ENCODE measurements at regions of chr19 and their contacts with region 1.

Region 1: DNA sequence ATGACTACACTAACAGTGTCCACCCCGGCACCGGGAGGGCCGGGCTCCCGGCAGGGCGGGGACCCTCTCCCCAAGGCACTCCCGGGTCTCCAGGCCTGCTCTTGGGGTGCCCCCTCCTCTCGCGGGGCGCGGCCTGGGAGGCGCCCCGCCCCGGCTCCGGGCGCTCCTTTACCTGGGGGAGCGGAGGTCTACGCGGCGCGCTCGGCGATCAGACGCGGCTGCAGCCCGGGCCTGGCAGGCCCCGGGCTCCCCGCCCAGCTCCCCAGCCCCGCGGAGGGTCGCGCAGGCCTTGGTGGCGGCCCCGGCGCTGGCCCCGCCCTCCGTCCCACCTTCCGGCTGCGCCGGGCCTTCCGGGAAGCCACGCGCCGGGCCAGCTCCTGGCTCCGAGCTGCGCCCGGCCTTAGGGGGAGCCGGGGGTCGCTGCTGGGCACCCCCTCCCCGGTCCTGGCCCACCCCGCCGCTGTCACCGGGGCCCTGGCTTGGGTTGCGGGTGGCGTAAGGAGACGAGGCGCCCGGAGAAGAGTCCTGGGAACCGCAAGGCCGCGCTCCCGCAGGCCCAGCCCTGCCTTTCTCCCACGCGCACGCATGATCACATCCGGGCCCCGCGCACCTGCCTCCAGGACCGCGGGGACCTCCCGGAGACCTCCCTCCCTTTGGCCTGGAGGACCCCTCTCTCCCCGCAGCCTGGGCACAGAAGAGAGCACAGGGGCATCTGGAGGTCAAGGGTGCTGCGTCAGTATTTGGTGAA is at the start of gene C19orf12:
- DNase-seq: peak; percentile 61
- ATAC-seq: peak; percentile 80
- H3K4me3 Mint-ChIP-seq: peak within 1 kb of the TSS; percentile 71
- H3K27ac Mint-ChIP-seq: peak within 1 kb of the TSS; percentile 77
- H3K4me1 Mint-ChIP-seq: peaks cover 32% of the 10 kb centered on the region
- H3K27me3 Mint-ChIP-seq: no peaks in the 10 kb centered on the region
- CTCF ChIP-seq: no peak
- total RNA-seq, gene C19orf12: 15.5 to 19.0 TPM (median 17.2 TPM) in 3 replicates

Region 2: GRCh38 chr19:29610563-29611271 is 104.4 kb before region 1 on chr19:
- CTCF ChIA-PET with region 1: interaction called, 63 read pairs
- POLR2A ChIA-PET with region 1: interaction called, 6 read pairs
- DNase-seq: peak; percentile 89
- ATAC-seq: peak; percentile 89
- H3K4me3 Mint-ChIP-seq: no peak overlapping the region
- H3K27ac Mint-ChIP-seq: no peak overlapping the region
- H3K4me1 Mint-ChIP-seq: peaks cover 9% of the 10 kb centered on the region
- H3K27me3 Mint-ChIP-seq: peaks cover 3% of the 10 kb centered on the region; the same call in 1 of the 2 replicates
- CTCF ChIP-seq: peak; percentile 54

Region 3: GRCh38 chr19:29645911-29646310 is 69.2 kb before region 1 on chr19:
- CTCF ChIA-PET with region 1: interaction called, 15 read pairs
- POLR2A ChIA-PET with region 1: no interaction called
- DNase-seq: no peak
- ATAC-seq: peak; percentile 28
- H3K4me3 Mint-ChIP-seq: 0 out of 2 replicates have a peak overlapping the region, but pooled peaks have one; percentile 10
- H3K27ac Mint-ChIP-seq: no peak overlapping the region
- H3K4me1 Mint-ChIP-seq: peaks cover 19% of the 10 kb centered on the region
- H3K27me3 Mint-ChIP-seq: no peaks in the 10 kb centered on the region
- CTCF ChIP-seq: no peak

Region 4: DNA sequence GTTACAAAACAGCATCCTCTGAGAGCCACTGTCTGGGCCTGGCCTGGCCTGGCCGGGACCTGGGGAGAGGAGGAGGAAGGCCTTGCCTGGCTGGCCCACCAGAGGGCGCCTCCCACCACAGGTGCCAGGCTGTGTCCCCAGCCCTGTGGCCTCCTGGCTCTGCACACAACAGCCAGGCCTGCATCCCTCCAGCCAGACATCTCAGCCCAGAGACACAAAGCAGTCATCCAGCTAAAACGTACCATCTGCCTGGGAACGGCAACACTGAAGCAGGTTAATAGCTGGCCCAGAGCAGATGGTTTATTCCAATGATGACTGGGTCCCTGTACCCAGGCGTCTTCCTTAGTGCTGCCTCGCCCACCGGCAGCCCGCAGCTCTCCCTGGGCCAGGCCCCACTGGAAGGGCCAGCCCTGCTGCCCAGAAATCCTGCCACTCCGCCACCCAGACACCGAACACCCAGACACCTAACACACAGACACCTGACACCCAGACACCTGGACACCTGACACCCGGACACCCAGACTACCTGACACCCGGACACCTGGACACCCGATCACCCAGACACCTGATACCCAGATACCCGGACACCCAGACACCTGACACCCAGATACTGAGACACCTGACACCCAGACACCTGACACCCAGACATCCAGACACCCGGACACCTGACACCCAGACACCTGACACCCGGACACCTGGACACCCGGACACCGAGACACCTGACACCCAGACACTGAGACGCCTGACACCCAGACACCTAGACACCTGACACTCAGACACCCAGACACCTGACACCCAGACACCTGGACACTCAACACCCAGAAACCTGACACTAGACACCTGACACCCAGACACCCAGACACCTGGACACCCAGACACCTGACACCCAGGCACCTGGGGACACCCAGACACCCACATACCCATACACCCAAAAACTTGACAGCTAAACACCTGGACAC is 20.2 kb before region 1 on chr19:
- CTCF ChIA-PET with region 1: interaction called, 35 read pairs
- POLR2A ChIA-PET with region 1: no interaction called
- DNase-seq: peak; percentile 87
- ATAC-seq: peak; percentile 97
- H3K4me3 Mint-ChIP-seq: no peak overlapping the region
- H3K27ac Mint-ChIP-seq: no peak overlapping the region
- H3K4me1 Mint-ChIP-seq: peaks cover 2% of the 10 kb centered on the region; the same call in 1 of the 2 replicates
- H3K27me3 Mint-ChIP-seq: no peaks in the 10 kb centered on the region
- CTCF ChIP-seq: peak; percentile 72

Region 5: GRCh38 chr19:29735800-29736199 is 20.7 kb after region 1 on chr19:
- CTCF ChIA-PET with region 1: interaction called, 58 read pairs
- POLR2A ChIA-PET with region 1: no interaction called
- DNase-seq: no peak
- ATAC-seq: no peak
- H3K4me3 Mint-ChIP-seq: no peak overlapping the region
- H3K27ac Mint-ChIP-seq: no peak overlapping the region
- H3K4me1 Mint-ChIP-seq: no peaks in the 10 kb centered on the region
- H3K27me3 Mint-ChIP-seq: no peaks in the 10 kb centered on the region
- CTCF ChIP-seq: no peak

Region 6: GRCh38 chr19:29823581-29824325 is 108.6 kb after region 1 on chr19:
- CTCF ChIA-PET with region 1: no interaction called
- POLR2A ChIA-PET with region 1: no interaction called
- DNase-seq: no peak
- ATAC-seq: no peak
- H3K4me3 Mint-ChIP-seq: no peak overlapping the region
- H3K27ac Mint-ChIP-seq: no peak overlapping the region
- H3K4me1 Mint-ChIP-seq: no peaks in the 10 kb centered on the region
- H3K27me3 Mint-ChIP-seq: no peaks in the 10 kb centered on the region
- CTCF ChIP-seq: no peak